ENCODE measurements at regions of chr7 and their contacts with region 1.

Region 1: GRCh38 chr7:121530227-121531174 is 134.4 kb upstream of the FAM3C start:
- DNase-seq: peak; percentile 46
- H3K4me3 Mint-ChIP-seq: no peak overlapping the region
- H3K27ac Mint-ChIP-seq: peak overlapping the region; percentile 62
- H3K4me1 Mint-ChIP-seq: peaks cover 17% of the 10 kb centered on the region
- H3K27me3 Mint-ChIP-seq: no peaks in the 10 kb centered on the region

Region 2: GRCh38 chr7:121235201-121235600 is 295.3 kb before region 1 on chr7:
- CTCF ChIA-PET with region 1: no interaction called
- intact Hi-C with region 1: no loop called
- DNase-seq: no peak
- H3K4me3 Mint-ChIP-seq: no peak overlapping the region
- H3K27ac Mint-ChIP-seq: no peak overlapping the region
- H3K4me1 Mint-ChIP-seq: no peaks in the 10 kb centered on the region
- H3K27me3 Mint-ChIP-seq: no peaks in the 10 kb centered on the region

Region 3: DNA sequence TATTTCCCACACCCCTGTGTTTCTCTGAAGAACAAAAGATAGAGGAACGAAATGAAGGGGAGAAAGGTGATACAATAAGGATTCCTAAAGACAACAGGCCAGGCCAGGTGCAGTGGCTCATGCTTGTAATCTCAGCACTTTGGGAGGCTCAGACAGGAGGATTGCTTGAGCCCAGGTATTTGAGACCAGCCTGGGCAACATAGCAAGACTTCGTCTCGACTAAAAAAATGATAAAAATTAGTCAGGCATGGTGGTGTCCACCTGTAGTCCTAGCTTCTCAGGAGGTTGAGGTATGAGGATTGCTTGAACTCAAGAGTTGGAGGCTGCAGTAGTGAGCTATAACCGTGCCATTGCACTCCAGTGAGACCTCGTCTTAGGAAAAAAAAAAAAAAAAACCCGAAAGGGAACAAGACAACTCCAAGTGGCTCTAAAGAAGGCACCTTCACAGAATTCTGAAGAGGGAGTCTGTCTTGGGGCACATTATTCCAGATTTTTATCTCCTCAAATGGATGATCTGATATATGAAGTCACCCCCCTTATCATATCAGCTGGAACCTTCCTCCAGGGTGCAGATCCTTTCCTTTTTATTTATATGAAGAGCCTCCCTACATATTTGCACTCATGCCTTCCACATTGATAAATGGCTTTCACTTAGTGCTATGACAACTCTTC is 92.9 kb before region 1 on chr7:
- CTCF ChIA-PET with region 1: no interaction called
- intact Hi-C with region 1: loop called (anchors 1 kb)
- DNase-seq: no peak
- H3K4me3 Mint-ChIP-seq: no peak overlapping the region
- H3K27ac Mint-ChIP-seq: no peak overlapping the region
- H3K4me1 Mint-ChIP-seq: peaks cover 22% of the 10 kb centered on the region
- H3K27me3 Mint-ChIP-seq: no peaks in the 10 kb centered on the region

Region 4: DNA sequence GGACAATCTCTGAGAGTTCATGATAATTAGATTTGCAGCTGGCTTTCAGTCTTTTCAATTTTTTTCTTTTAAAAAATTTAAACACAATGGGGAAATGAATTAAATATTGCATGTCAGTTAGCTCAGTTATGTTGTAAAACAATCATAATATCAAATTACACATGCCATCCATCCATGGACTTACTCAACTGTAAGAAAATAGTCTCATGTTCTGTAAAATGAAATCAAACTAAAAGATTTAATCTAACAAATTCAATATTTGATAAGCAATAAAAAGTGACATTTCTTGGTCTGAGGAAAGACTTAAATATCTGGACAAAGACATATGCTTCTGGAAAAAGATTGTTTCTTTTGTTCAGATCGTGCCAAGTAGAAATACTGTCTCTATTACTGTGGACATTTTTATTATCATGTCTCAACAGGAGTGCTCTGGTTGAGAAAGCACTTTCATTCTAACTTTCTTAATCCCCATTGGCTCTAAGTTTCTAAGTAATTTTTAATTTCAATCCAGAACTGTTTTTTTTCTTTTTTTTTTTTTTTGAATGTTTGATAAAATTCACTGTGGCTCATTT is 44.8 kb after region 1 on chr7:
- CTCF ChIA-PET with region 1: no interaction called
- intact Hi-C with region 1: no loop called
- DNase-seq: no peak
- H3K4me3 Mint-ChIP-seq: no peak overlapping the region
- H3K27ac Mint-ChIP-seq: no peak overlapping the region
- H3K4me1 Mint-ChIP-seq: no peaks in the 10 kb centered on the region
- H3K27me3 Mint-ChIP-seq: peaks cover 22% of the 10 kb centered on the region

Measured in activated naive CD4-positive, alpha-beta T cell treated with anti-CD3 and anti-CD28 coated beads for 36 hours (primary cell).